ENCODE measurements at regions of chr3 and their contacts with region 1.

Region 1: DNA sequence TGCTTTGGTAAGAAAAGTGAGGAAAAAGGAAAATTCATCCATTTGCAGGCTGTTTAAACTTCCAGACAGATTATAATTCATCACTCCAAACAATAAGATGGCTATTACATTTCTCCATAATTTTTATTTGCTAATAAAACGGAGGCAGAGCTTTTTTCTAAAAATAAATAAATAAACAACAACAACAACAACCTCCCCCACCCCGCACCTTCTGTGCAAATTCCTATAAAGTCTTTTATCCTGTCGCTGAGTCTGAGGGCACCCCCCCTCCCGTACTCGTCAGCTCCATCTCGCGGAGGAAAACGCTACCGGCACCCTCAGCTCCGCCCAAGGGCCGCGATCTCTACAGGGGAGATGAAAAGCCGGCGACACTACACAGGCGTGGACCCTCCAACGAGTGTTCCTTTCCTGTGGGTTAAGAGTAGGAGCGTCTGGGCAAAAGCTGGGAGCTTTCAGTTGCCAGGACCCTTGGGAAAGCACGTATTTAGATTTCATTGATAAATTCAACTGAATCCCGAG is 1.0 kb upstream of the ATP1B3 start:
- DNase-seq: peak; percentile 92
- ATAC-seq: peak; percentile 92

Region 2: GRCh38 chr3:141796081-141796888 is 79.1 kb before region 1 on chr3:
- intact Hi-C with region 1: loop called (anchors 1 kb)
- DNase-seq: peak; percentile 82
- ATAC-seq: peak; percentile 80

Measured in Right ventricle myocardium inferior (tissue), 1 donor.